HEK293T (cell line): ENCODE measurements at regions of chr12 and their contacts with region 1.

Region 1: GRCh38 chr12:10140001-10140400 is 10.0 kb upstream of the CLEC7A start:
- DNase-seq: peak; percentile 32

Region 2: GRCh38 chr12:10016881-10017280 is 123.1 kb before region 1 on chr12:
- CTCF ChIA-PET with region 1: interaction called, 13 read pairs
- POLR2A ChIA-PET with region 1: no interaction called
- DNase-seq: no peak